ENCODE measurements at regions of chr7 and their contacts with region 1.

Region 1: GRCh38 chr7:71408271-71408670 is 276.3 kb downstream of the GALNT17 start:
- DNase-seq: peak; percentile 70
- ATAC-seq: peak; percentile 93

Region 2: DNA sequence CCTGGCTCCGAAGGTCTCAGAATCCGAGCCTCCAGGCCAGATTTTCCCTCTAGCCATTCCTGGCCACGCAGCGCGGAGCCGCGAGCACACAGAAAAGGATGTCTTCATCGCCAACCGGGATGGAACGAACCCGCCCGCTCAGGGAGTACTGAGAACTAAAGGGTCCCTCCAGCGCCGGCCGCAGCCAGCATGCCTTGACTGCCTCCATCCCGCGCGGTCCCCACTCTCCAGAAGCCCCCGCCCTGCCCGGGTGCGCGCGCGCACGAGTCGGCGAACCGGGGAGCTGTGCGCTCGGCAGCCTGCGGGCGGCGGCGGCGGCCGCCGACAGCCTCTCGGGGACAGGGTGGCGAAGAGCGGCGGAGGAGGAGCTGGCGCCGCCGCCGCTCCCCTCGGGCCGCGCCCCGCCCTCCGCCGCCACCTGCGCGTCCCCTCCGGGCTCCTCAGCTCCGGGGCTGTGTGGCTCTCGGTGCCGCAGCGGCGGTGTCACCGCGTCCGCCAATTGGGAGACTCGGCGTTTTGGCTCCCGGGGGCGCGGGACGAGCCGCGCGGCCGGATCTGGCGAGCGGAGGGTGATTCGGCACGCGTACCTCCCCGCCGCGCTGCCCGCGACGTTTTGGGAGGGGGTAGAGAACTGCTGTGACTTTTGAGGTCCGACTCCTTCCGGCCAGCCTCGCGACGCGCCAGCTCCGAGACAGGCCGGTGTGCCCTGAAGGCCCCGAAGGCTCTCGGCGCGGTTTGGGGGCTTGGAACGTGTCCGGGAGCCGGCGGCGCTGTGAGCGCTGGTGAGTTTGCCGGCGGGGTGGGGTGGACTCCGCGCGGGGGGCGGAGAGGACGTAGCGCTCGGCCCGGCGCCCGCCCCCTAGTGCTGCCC is 276.8 kb before region 1 on chr7:
- intact Hi-C with region 1: loop called (anchors 2 kb)
- DNase-seq: peak; percentile 75
- ATAC-seq: peak; percentile 85

Region 3: DNA sequence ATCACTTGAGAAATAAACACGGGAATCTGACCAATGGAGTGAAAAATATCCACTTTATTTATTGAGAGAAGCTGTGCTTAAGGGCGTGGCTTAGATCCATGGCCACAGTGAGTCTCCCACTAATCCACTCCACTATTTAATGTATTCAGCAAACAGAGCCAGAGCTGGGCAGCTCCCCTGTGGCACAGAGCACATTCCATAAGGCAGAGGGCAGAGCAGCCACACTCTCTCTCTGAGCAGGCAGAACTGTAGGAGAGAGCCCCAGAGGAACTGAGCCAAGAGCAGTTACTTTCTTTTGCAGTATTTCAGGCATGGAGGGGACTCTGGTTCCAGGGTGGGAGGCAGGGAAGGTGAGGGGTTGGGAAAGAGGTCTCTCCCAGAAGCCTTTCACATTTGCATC is 170.3 kb before region 1 on chr7:
- intact Hi-C with region 1: loop called (anchors 5 kb)
- DNase-seq: no peak
- ATAC-seq: peak; percentile 90

Region 4: GRCh38 chr7:71343892-71344291 is 64.4 kb before region 1 on chr7:
- intact Hi-C with region 1: loop called (anchors 5 kb)
- DNase-seq: no peak
- ATAC-seq: no peak

Region 5: DNA sequence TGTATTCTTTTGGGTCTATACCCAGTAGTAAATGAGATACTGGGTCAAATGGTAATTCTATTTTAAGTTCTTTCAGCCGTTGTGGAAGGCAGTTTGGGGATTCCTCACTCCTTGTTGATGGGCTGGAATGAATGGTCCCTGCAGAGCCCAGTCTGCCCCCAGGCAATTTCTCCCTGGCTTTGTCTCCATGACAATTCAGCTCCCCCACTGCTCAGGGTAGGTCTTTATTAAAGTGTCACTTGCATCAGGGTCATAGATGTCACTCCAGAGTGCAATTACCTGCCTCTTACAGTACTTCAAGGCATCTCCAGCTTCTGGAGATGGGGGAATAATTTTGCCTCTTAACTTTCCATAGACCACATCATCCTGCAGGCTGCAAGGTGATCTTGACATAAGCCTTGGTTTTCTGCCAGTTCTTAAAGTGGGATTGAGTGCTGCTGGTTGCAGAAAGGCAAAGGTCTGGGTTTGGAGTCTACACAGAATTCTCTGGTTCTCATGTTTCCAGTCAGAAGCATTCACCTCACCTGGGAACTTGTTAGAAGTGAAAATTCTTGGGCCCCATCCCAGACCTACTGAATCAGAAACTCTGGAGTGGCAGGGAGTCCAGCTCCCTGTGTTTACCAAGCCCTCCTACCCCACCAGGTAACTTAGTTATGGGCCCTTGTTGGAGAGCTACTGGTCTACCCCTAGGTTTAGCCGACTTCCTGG is 166.0 kb after region 1 on chr7:
- intact Hi-C with region 1: no loop called
- DNase-seq: no peak
- ATAC-seq: no peak

Region 6: GRCh38 chr7:71661671-71662224 is 253.5 kb after region 1 on chr7:
- intact Hi-C with region 1: loop called (anchors 5 kb)
- DNase-seq: no peak
- ATAC-seq: peak; percentile 90

Measured in Right ventricle myocardium inferior (tissue), 1 donor.